ENCODE measurements at regions of chr3 and their contacts with region 1.

Region 1: DNA sequence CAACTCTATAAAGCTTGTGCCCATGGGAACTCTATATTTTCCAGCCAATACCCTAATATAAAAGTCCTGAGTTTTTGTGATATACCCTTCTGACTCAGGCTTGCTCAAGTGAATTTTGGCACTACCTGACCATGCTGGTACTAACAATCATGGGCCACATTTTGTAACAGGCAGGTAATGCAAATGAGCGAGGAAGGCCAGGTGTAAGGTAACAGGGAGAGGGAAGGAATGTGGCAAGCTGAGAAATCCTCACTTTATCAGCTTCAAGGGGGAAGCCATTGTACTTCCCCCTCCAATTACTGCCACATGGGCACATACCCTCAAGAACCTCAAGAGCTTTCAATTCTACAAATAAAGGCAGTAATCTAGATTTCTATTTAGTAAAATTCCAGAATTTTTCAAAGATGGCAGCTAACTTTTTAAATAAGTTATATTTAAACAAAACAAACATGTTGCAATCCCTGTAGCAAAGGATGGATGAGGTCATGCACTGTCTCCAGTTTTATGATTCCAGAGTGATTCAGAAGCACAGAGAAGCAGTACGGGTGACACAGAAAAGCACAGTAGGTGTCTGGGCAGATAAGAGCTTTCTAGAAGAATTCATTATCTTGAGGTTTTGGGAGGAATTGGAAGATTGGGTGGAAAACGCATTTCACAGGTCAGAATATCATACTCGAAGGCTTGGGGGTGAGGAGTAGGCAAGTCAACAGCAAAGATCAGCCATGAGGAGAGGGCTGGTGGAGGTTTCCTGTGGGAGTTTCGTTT is 87.6 kb downstream of the FOXP1 start:
- DNase-seq: peak in 1 of 2 donors; percentile 67
- ATAC-seq: peak; percentile 41 to 63 (median 62)
- H3K4me3 ChIP-seq: no peak overlapping the region
- H3K4me3 Mint-ChIP-seq: peak overlapping the region; percentile 84
- H3K27ac ChIP-seq: peak overlapping the region; percentile 60
- H3K27ac Mint-ChIP-seq: peak overlapping the region; percentile 86 to 95
- H3K4me1 ChIP-seq: peaks cover 35% of the 10 kb centered on the region
- H3K4me1 Mint-ChIP-seq: peaks cover 57 to 67% of the 10 kb centered on the region in 2 donors
- H3K27me3 ChIP-seq: no peaks in the 10 kb centered on the region
- H3K27me3 Mint-ChIP-seq: no peaks in the 10 kb centered on the region
- CTCF ChIP-seq: no peak

Region 2: GRCh38 chr3:71064288-71064955 is 431.5 kb before region 1 on chr3:
- intact Hi-C with region 1: loop called (anchors 5 kb)
- DNase-seq: peak; percentile 64 to 80
- ATAC-seq: peak; percentile 37 to 68 (median 55)
- H3K4me3 ChIP-seq: peak overlapping the region; percentile 55
- H3K4me3 Mint-ChIP-seq: no peak overlapping the region
- H3K27ac ChIP-seq: peak overlapping the region; percentile 82
- H3K27ac Mint-ChIP-seq: no peak overlapping the region
- H3K4me1 ChIP-seq: peaks cover 33% of the 10 kb centered on the region
- H3K4me1 Mint-ChIP-seq: peaks cover 35 to 38% of the 10 kb centered on the region in 2 donors
- H3K27me3 ChIP-seq: no peaks in the 10 kb centered on the region
- H3K27me3 Mint-ChIP-seq: no peaks in the 10 kb centered on the region
- CTCF ChIP-seq: no peak

Region 3: GRCh38 chr3:71130471-71131374 is 365.2 kb before region 1 on chr3:
- intact Hi-C with region 1: loop called (anchors 5 kb)
- DNase-seq: peak; percentile 62 to 88
- ATAC-seq: peak; percentile 74 to 87 (median 84)
- H3K4me3 ChIP-seq: peak overlapping the region; percentile 63
- H3K4me3 Mint-ChIP-seq: peak overlapping the region; percentile 95
- H3K27ac ChIP-seq: peak overlapping the region; percentile 86
- H3K27ac Mint-ChIP-seq: peak overlapping the region; percentile 93 to 98
- H3K4me1 ChIP-seq: peaks cover 18% of the 10 kb centered on the region
- H3K4me1 Mint-ChIP-seq: peaks cover 62 to 69% of the 10 kb centered on the region in 2 donors
- H3K27me3 ChIP-seq: no peaks in the 10 kb centered on the region
- H3K27me3 Mint-ChIP-seq: no peaks in the 10 kb centered on the region
- CTCF ChIP-seq: no peak

Region 4: DNA sequence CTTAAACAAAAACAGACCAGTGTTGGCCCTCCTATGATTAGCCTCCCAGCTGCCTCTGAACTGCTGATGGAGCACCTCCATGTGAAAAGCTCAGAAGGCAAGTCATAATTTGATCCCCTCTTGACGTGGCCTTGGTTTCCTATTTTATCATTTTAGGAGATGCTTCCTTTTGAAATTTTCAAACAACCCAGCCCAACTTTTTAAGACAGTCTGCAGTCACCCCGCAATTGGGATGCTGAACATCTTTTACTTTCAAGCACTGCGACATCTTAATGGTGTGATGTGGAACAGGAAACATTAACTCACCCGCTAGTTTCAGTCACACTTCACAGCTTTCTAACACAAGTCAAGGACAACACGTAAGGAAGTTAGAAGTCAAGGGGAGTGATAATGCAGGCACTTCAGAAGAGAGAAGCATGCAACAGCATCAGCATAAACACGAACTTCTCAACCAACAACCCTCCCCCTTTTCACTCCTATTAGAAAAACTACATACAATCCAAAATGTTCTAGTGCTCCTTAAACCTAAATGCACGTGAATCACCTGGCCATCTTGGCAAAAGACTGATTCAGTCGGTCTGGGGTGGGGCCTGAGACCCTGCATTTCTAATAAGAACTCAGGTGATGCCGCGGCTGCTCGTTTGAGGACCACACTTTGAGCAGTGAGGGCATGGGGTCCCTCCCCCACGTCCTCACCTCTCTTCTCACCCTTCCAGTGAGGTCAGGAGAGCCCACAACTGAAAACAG is 73.9 kb before region 1 on chr3:
- intact Hi-C with region 1: loop called (anchors 5 kb)
- DNase-seq: peak; percentile 28 to 79
- ATAC-seq: peak; percentile 92 to 94 (median 93)
- H3K4me3 ChIP-seq: no peak overlapping the region
- H3K4me3 Mint-ChIP-seq: peak overlapping the region; percentile 70
- H3K27ac ChIP-seq: peak overlapping the region; percentile 91
- H3K27ac Mint-ChIP-seq: peak overlapping the region; percentile 93 to 95
- H3K4me1 ChIP-seq: peaks cover 26% of the 10 kb centered on the region
- H3K4me1 Mint-ChIP-seq: peaks cover 47 to 56% of the 10 kb centered on the region in 2 donors
- H3K27me3 ChIP-seq: no peaks in the 10 kb centered on the region
- H3K27me3 Mint-ChIP-seq: no peaks in the 10 kb centered on the region
- CTCF ChIP-seq: no peak

Region 5: GRCh38 chr3:71444028-71444860 is 51.6 kb before region 1 on chr3:
- intact Hi-C with region 1: loop called (anchors 5 kb)
- DNase-seq: peak; percentile 48 to 94
- ATAC-seq: peak; percentile 78 to 88 (median 84)
- H3K4me3 ChIP-seq: no peak overlapping the region
- H3K4me3 Mint-ChIP-seq: peak overlapping the region; percentile 78
- H3K27ac ChIP-seq: peak overlapping the region; percentile 93
- H3K27ac Mint-ChIP-seq: peak overlapping the region; percentile 93 to 96
- H3K4me1 ChIP-seq: peaks cover 81% of the 10 kb centered on the region
- H3K4me1 Mint-ChIP-seq: peaks cover 71 to 75% of the 10 kb centered on the region in 2 donors
- H3K27me3 ChIP-seq: no peaks in the 10 kb centered on the region
- H3K27me3 Mint-ChIP-seq: no peaks in the 10 kb centered on the region
- CTCF ChIP-seq: no peak

Region 6: DNA sequence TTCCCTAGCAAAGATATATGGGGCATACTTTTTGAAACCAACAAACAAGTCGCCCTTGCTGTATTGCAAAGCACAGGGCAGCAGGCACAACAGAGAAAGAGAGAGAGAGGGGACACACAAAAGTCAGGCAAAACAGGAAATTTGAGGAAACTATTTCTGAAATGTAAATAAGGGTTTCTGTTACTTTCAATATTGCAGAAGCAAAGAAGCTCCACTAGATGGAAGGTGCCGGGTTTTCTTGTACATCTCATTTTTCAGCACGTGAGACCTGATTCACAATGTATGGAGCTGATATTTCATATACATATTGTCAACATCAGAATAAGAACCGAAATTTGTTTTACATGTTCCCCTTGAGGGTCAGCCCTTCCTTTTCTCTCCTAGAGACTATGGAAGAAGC is 39.7 kb before region 1 on chr3:
- intact Hi-C with region 1: loop called (anchors 1 kb)
- DNase-seq: peak in 1 of 2 donors; percentile 65
- ATAC-seq: peak; percentile 43 to 52 (median 50)
- H3K4me3 ChIP-seq: peak overlapping the region; percentile 17
- H3K4me3 Mint-ChIP-seq: peak overlapping the region; percentile 69
- H3K27ac ChIP-seq: peak overlapping the region; percentile 76
- H3K27ac Mint-ChIP-seq: peak overlapping the region; percentile 85 to 92
- H3K4me1 ChIP-seq: peaks cover 42% of the 10 kb centered on the region
- H3K4me1 Mint-ChIP-seq: peaks cover 69% of the 10 kb centered on the region in 2 donors
- H3K27me3 ChIP-seq: no peaks in the 10 kb centered on the region
- H3K27me3 Mint-ChIP-seq: no peaks in the 10 kb centered on the region
- CTCF ChIP-seq: no peak

Measured in natural killer cell (primary cell).